Adrenal gland (tissue), 19 donors: ENCODE measurements at regions of chr17 and their contacts with region 1.

Region 1: GRCh38 chr17:27332485-27333409 is 38.8 kb downstream of the WSB1 start:
- DNase-seq: peak; percentile 98 to 100 (median 99)
- H3K4me3 ChIP-seq: peak overlapping the region in 2 of 4 donors; percentile 27 to 51
- H3K27ac ChIP-seq: peak overlapping the region; percentile 84 to 96 (median 93)
- H3K4me1 ChIP-seq: peaks cover 14 to 19% of the 10 kb centered on the region in 2 donors
- H3K27me3 ChIP-seq: no peaks in the 10 kb centered on the region
- CTCF ChIP-seq: peak; percentile 56 to 97 (median 94)
- POLR2A ChIP-seq: peak; percentile 31 to 49

Region 2: DNA sequence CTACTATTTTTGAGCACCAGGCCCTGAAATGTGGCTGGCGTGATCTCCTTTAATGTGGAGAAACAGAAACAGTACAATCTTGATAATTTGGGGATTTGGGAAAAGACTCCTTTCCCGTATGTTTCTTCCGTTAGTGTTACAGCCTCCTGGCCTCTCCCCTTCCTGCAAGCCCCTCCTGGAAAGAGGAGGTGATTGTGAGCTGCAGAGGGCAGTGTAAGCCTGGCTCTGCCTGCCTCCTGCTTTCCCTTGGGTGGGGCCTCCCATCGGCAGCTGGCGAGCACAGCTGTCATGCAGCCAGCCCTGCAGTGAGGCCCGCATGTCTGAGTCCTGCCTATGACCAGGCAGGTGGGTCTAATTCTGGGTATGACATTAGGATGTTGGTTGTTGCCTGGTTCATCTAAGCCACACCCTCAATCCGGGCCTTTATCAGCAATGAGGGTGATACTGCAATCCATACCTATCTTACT is 87.5 kb before region 1 on chr17:
- intact Hi-C with region 1: loop called (anchors 2 to 5 kb)
- DNase-seq: peak; percentile 77 to 90 (median 83)
- H3K4me3 ChIP-seq: no peak overlapping the region
- H3K27ac ChIP-seq: peak overlapping the region; percentile 71 to 94 (median 86)
- H3K4me1 ChIP-seq: peaks cover 23 to 50% of the 10 kb centered on the region in 2 donors
- H3K27me3 ChIP-seq: no peaks in the 10 kb centered on the region
- CTCF ChIP-seq: peak; percentile 26 to 77 (median 64)
- POLR2A ChIP-seq: peak in 1 of 2 donors; percentile 16

Region 3: GRCh38 chr17:27293898-27294688 is 38.7 kb before region 1 on chr17 and contains the start of gene WSB1:
- intact Hi-C with region 1: loop called in 1 of 2 experiments (anchors 5 kb)
- DNase-seq: peak; percentile 91 to 97 (median 94)
- H3K4me3 ChIP-seq: peak within 1 kb of the TSS; percentile 84 to 99 (median 92)
- H3K27ac ChIP-seq: peak within 1 kb of the TSS; percentile 98 to 100 (median 100)
- H3K4me1 ChIP-seq: peaks cover 9 to 39% of the 10 kb centered on the region in 2 donors
- H3K27me3 ChIP-seq: no peaks in the 10 kb centered on the region
- CTCF ChIP-seq: peak in 4 of 6 experiments; percentile 6 to 9 (median 7)
- POLR2A ChIP-seq: peak; percentile 96 to 99
- total RNA-seq, gene WSB1: 27.5 to 170 (median 113) TPM

Region 4: GRCh38 chr17:27396941-27397340 is 64.2 kb after region 1 on chr17:
- intact Hi-C with region 1: no loop called
- DNase-seq: no peak
- H3K4me3 ChIP-seq: no peak overlapping the region
- H3K27ac ChIP-seq: no peak overlapping the region
- H3K4me1 ChIP-seq: peaks cover 0 to 4% of the 10 kb centered on the region in 2 donors
- H3K27me3 ChIP-seq: no peaks in the 10 kb centered on the region
- CTCF ChIP-seq: no peak
- POLR2A ChIP-seq: no peak